WTC11 (cell line): ENCODE measurements at regions of chr3 and their contacts with region 1.

Region 1: DNA sequence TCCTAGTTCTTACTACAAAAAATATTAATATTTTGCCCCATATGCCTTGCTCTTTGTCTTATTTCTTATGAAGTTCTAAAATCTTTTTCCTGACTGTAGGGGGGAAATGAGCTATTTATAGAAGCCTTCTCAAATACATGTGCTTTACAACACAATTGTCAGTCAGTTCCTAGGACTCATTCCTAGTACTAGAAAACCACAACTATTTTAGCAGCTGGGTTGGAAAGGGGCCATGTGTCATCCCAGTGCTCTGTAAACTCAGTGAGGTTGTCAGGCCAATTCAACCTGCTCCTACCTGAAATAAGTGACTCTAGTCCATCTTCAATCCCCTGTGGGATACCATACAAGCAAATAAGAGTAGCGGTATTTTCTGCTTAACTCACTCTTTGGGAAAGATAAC is 153.8 kb downstream of the ULK4 start:
- DNase-seq: no peak
- ATAC-seq: no peak
- H3K4me3 Mint-ChIP-seq: no peak overlapping the region
- H3K27ac Mint-ChIP-seq: no peak overlapping the region; the same call in 1 of the 2 replicates
- H3K4me1 Mint-ChIP-seq: peaks cover 4% of the 10 kb centered on the region
- H3K27me3 Mint-ChIP-seq: no peaks in the 10 kb centered on the region
- CTCF ChIP-seq: no peak

Region 2: GRCh38 chr3:41792806-41793205 is 15.3 kb before region 1 on chr3:
- CTCF ChIA-PET with region 1: no interaction called
- POLR2A ChIA-PET with region 1: no interaction called
- DNase-seq: no peak
- ATAC-seq: no peak
- H3K4me3 Mint-ChIP-seq: no peak overlapping the region
- H3K27ac Mint-ChIP-seq: no peak overlapping the region
- H3K4me1 Mint-ChIP-seq: peaks cover 43% of the 10 kb centered on the region
- H3K27me3 Mint-ChIP-seq: no peaks in the 10 kb centered on the region
- CTCF ChIP-seq: no peak

Region 3: DNA sequence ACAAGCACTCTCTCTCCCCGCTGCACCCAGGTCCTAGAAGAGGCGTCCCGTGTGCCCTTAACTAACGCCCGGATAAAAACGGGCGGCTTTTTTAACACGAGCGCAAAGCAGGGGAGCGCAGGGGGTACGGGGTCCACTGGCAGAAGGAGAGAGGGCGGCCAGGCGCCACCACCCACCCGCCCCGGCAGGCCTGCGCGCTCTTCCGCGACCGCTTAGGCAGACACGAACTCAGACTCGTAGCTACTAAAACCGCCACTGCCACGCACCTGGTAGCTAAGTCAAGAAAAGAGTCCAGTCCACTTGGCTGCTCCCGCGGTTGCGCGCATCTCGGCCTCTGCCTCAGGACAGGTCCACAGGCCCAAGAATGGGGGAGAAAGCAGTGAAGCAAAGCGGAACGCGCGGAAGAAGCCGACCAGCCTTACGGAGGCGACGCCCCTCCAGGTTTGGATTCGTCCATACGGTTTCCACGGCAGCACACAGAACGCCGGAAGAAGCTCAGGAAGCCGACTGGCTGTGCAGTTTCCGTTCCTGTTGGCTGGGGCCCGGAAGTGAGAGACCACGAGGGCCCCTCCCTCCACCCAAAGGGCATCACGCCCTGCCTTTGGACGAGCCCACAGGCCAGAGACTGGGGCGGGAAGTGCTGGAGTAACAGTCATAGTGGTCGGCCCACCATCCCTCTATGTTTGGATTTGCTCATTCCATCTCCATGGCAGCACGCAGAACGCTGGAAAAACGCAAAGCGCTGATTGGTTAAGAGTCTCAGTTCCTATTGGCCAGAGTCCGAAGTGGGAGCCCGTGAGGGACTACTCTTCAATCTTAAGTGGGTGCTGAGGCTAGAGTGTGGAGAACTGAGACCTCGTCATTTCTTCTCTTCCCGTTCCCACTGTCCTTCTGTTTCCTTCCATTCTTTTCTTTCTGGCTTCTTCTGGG is 153.9 kb after region 1 on chr3 and contains the start of gene ULK4:
- CTCF ChIA-PET with region 1: no interaction called
- POLR2A ChIA-PET with region 1: interaction called, 11 read pairs
- DNase-seq: peak; percentile 95
- ATAC-seq: peak; percentile 90
- H3K4me3 Mint-ChIP-seq: peak within 1 kb of the TSS; percentile 99
- H3K27ac Mint-ChIP-seq: peak within 1 kb of the TSS; percentile 97
- H3K4me1 Mint-ChIP-seq: peaks cover 19% of the 10 kb centered on the region
- H3K27me3 Mint-ChIP-seq: no peaks in the 10 kb centered on the region
- CTCF ChIP-seq: no peak
- total RNA-seq, gene ULK4: 9.2 to 12.2 TPM (median 10.0 TPM) in 3 replicates